Panc1 (cell line): ENCODE measurements at regions of chr3 and their contacts with region 1.

Region 1: GRCh38 chr3:69691860-69692259 is 47.4 kb upstream of the MITF start:
- DNase-seq: no peak
- ATAC-seq: no peak
- H3K4me3 ChIP-seq: no peak overlapping the region
- H3K27ac ChIP-seq: no peak overlapping the region; the same call in 1 of the 2 replicates
- H3K4me1 ChIP-seq: no peaks in the 10 kb centered on the region; the same call in 1 of the 2 replicates
- H3K27me3 ChIP-seq: no peaks in the 10 kb centered on the region
- CTCF ChIP-seq: no peak

Region 2: GRCh38 chr3:69738315-69738714 is 46.5 kb after region 1 on chr3:
- CTCF ChIA-PET with region 1: interaction called, 11 read pairs
- POLR2A ChIA-PET with region 1: no interaction called
- in situ Hi-C with region 1: no loop called
- intact Hi-C with region 1: no loop called
- DNase-seq: no peak
- ATAC-seq: no peak
- H3K4me3 ChIP-seq: peak overlapping the region; percentile 68 to 82
- H3K27ac ChIP-seq: no peak overlapping the region
- H3K4me1 ChIP-seq: peaks cover 4% of the 10 kb centered on the region; the same call in 1 of the 2 replicates
- H3K27me3 ChIP-seq: no peaks in the 10 kb centered on the region
- CTCF ChIP-seq: no peak

Region 3: GRCh38 chr3:69770219-69770618 is 78.4 kb after region 1 on chr3:
- CTCF ChIA-PET with region 1: no interaction called
- POLR2A ChIA-PET with region 1: no interaction called
- in situ Hi-C with region 1: no loop called
- intact Hi-C with region 1: no loop called
- DNase-seq: peak; percentile 88
- ATAC-seq: peak; percentile 79
- H3K4me3 ChIP-seq: no peak overlapping the region
- H3K27ac ChIP-seq: peak overlapping the region; percentile 54
- H3K4me1 ChIP-seq: peaks cover 22% of the 10 kb centered on the region
- H3K27me3 ChIP-seq: no peaks in the 10 kb centered on the region
- CTCF ChIP-seq: no peak

Region 4: DNA sequence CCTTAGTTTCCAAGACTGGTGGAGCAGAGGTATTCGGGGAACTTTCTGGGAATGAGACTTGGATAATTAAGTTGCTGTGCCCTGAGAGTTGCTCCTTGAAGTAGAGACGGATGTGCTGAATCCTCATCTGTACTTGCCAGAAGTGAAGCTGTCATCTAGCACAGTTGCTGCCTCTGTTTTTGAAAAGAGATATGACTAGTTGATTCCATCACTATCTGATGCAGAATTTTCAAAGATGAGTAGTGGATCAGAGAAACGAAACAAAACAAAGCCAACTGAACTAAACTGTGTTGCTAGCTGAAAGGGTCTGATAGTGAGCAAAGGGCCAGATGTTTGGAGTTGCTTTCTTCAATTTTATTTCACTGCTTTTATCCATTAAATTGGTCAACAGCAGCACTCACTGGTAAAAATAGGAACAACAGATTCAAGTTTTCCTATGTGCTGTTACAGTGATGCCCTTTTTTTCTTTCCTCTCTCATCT is 100.1 kb after region 1 on chr3:
- CTCF ChIA-PET with region 1: no interaction called
- POLR2A ChIA-PET with region 1: no interaction called
- in situ Hi-C with region 1: no loop called
- intact Hi-C with region 1: loop called (anchors 1 kb)
- DNase-seq: no peak
- ATAC-seq: peak; percentile 70; the same call in 1 of the 2 replicates
- H3K4me3 ChIP-seq: no peak overlapping the region
- H3K27ac ChIP-seq: no peak overlapping the region
- H3K4me1 ChIP-seq: no peaks in the 10 kb centered on the region
- H3K27me3 ChIP-seq: no peaks in the 10 kb centered on the region
- CTCF ChIP-seq: peak; percentile 30; the same call in 1 of the 2 replicates

Region 5: GRCh38 chr3:69855436-69856162 is 163.7 kb after region 1 on chr3:
- CTCF ChIA-PET with region 1: no interaction called
- POLR2A ChIA-PET with region 1: no interaction called
- in situ Hi-C with region 1: no loop called
- intact Hi-C with region 1: loop called (anchors 5 kb)
- DNase-seq: no peak
- ATAC-seq: no peak
- H3K4me3 ChIP-seq: no peak overlapping the region
- H3K27ac ChIP-seq: no peak overlapping the region
- H3K4me1 ChIP-seq: no peaks in the 10 kb centered on the region; the same call in 1 of the 2 replicates
- H3K27me3 ChIP-seq: no peaks in the 10 kb centered on the region
- CTCF ChIP-seq: peak; percentile 40; the same call in 1 of the 2 replicates

Region 6: DNA sequence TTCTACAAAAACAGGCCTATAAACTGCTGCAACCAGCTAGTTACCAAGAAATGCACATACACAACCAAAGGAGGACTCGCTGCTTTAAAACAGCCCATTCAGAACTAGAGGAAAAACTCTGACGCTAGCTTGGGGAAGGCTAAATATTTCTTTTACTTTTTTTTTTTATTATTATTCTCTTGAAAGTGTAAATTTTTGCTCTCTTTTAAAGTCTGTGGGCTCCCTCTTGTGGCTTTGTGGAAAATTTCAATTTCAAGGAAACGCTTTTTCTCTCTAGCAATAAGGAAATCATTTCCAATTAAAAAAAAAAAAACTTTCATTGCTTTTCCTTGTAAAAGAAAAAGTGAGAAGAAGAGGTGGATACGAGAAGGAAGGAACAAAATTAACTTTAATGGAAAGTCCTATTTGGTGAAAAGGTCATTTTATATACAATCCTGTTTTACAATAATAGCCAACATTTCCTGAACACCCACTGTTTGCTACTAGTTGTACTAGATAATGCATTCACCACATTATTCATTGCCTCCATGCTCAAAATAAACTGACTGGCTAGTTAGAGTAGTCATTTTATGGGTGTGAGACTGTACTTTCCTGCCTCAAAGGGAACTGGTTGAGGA is 256.5 kb after region 1 on chr3:
- CTCF ChIA-PET with region 1: no interaction called
- POLR2A ChIA-PET with region 1: no interaction called
- in situ Hi-C with region 1: no loop called
- intact Hi-C with region 1: loop called (anchors 5 kb)
- DNase-seq: no peak
- ATAC-seq: no peak
- H3K4me3 ChIP-seq: no peak overlapping the region
- H3K27ac ChIP-seq: no peak overlapping the region
- H3K4me1 ChIP-seq: no peaks in the 10 kb centered on the region
- H3K27me3 ChIP-seq: no peaks in the 10 kb centered on the region
- CTCF ChIP-seq: peak; percentile 60; the same call in 1 of the 2 replicates